ENCODE measurements at regions of chr16 and their contacts with region 1.

Region 1: GRCh38 chr16:68264128-68265077 is at the start of gene SLC7A6:
- DNase-seq: peak; percentile 92
- ATAC-seq: peak; percentile 69
- H3K4me3 Mint-ChIP-seq: peak within 1 kb of the TSS; percentile 91
- H3K27ac Mint-ChIP-seq: peak within 1 kb of the TSS; percentile 97
- H3K4me1 Mint-ChIP-seq: peaks cover 43% of the 10 kb centered on the region
- H3K27me3 Mint-ChIP-seq: no peaks in the 10 kb centered on the region
- total RNA-seq, gene SLC7A6: 55.7 to 58.7 TPM

Region 2: DNA sequence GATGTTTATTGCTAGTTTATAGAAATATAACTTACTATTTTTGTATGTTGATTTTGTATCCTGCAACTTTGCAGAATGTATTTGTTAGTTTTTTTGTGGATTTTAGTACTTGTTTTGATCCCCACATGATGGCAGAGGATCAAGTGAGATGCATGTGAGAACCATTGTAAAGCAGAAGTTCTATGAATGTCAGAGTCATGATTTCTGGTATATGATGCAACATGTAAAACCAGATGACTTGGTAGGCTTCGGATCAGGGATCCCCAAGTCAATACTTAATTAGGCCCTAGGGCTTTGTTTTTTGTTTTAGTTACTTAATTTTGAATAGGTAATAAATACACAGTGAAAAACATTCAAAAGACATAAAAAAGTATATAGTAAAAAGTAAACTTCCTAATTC is 74.3 kb before region 1 on chr16:
- CTCF ChIA-PET with region 1: no interaction called
- POLR2A ChIA-PET with region 1: no interaction called
- intact Hi-C with region 1: no loop called
- DNase-seq: no peak
- ATAC-seq: no peak
- H3K4me3 Mint-ChIP-seq: no peak overlapping the region
- H3K27ac Mint-ChIP-seq: no peak overlapping the region
- H3K4me1 Mint-ChIP-seq: peaks cover 6% of the 10 kb centered on the region
- H3K27me3 Mint-ChIP-seq: no peaks in the 10 kb centered on the region

Region 3: DNA sequence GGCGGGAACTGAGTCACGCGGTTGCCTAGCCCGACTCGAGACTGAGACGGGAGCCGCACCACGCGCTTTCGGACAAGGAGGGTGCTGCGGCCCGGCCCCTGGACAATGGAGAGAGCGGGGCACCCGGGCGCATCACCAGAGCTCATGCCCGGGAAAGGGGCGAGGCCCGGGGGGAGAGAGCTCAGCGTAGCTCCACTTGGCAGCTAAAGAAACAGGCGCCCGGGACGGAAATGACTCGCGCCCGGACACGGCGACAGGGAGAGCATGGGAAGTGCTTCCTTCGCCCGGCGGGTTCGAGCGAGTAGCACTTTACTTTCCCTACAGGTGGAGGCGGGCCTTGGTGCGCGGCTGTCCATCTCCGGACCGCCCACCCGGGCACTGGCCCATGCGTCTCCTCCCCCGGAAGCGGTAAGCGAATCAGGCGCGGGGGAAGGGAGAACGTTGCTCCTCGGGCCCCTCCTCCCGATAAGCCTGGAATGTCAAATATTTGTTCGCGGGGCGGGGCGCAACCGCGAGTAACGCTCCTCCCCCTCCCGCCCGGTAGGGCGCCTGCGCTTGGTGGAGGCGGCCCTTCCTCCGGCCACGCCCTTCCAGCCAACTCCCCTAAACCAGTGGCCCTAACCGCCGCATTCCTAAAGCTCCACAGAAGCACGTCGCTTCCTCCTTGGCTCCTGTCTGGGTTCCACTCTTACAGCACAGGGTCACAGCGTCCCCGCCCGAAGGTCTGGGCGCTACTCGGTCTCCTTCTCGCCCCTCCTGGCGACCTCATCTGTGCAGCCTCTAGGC is 27.0 kb before region 1 on chr16:
- CTCF ChIA-PET with region 1: interaction called, 16 read pairs
- POLR2A ChIA-PET with region 1: interaction called, 3 read pairs
- intact Hi-C with region 1: loop called in 1 of 2 experiments (anchors 1 kb)
- DNase-seq: peak; percentile 96
- ATAC-seq: peak; percentile 79
- H3K4me3 Mint-ChIP-seq: peak overlapping the region; percentile 83
- H3K27ac Mint-ChIP-seq: peak overlapping the region; percentile 86
- H3K4me1 Mint-ChIP-seq: peaks cover 40% of the 10 kb centered on the region
- H3K27me3 Mint-ChIP-seq: no peaks in the 10 kb centered on the region

Region 4: DNA sequence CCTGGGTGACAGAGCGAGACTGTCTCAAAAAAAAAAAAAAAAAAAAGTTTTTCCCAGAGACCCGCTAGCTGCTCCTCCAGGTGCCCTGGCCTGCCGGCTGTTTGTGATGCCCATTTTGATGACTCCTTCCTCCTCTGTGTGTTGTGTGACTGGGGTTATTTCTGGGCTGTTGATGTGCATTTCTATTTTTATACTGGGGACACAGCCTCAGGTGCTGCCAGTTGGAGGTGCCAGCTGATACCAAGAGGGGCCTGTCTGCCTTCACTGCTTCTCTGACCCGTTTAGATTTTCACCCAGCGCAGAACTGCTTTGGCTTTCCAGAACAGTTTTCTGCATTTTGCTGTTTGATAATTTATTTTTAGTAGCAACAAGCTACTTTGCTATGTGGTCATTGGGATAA is 12.6 kb before region 1 on chr16:
- CTCF ChIA-PET with region 1: interaction called, 23 read pairs
- POLR2A ChIA-PET with region 1: interaction called, 3 read pairs
- intact Hi-C with region 1: no loop called
- DNase-seq: no peak
- ATAC-seq: no peak
- H3K4me3 Mint-ChIP-seq: no peak overlapping the region
- H3K27ac Mint-ChIP-seq: no peak overlapping the region
- H3K4me1 Mint-ChIP-seq: peaks cover 2% of the 10 kb centered on the region
- H3K27me3 Mint-ChIP-seq: no peaks in the 10 kb centered on the region

Region 5: GRCh38 chr16:68281368-68282063 is 17.1 kb after region 1 on chr16:
- CTCF ChIA-PET with region 1: interaction called, 67 read pairs
- POLR2A ChIA-PET with region 1: interaction called, 14 read pairs
- intact Hi-C with region 1: loop called (anchors 1 to 2 kb)
- DNase-seq: no peak
- ATAC-seq: peak; percentile 28
- H3K4me3 Mint-ChIP-seq: no peak overlapping the region
- H3K27ac Mint-ChIP-seq: peak overlapping the region; percentile 90
- H3K4me1 Mint-ChIP-seq: peaks cover 77% of the 10 kb centered on the region
- H3K27me3 Mint-ChIP-seq: no peaks in the 10 kb centered on the region

Region 6: GRCh38 chr16:68310761-68311511 is 46.5 kb after region 1 on chr16 and contains the starts of genes PRMT7 and SLC7A6OS:
- CTCF ChIA-PET with region 1: interaction called, 18 read pairs
- POLR2A ChIA-PET with region 1: interaction called, 19 read pairs
- intact Hi-C with region 1: loop called (anchors 1 kb)
- DNase-seq: peak; percentile 97
- ATAC-seq: peak; percentile 99
- H3K4me3 Mint-ChIP-seq: peak within 1 kb of the TSS; percentile 90
- H3K27ac Mint-ChIP-seq: peak within 1 kb of the TSS; percentile 92
- H3K4me1 Mint-ChIP-seq: peaks cover 42% of the 10 kb centered on the region
- H3K27me3 Mint-ChIP-seq: no peaks in the 10 kb centered on the region
- total RNA-seq, gene PRMT7: 62.7 to 70.7 TPM
- total RNA-seq, gene SLC7A6OS: 17.4 to 21.7 TPM

Region 7: DNA sequence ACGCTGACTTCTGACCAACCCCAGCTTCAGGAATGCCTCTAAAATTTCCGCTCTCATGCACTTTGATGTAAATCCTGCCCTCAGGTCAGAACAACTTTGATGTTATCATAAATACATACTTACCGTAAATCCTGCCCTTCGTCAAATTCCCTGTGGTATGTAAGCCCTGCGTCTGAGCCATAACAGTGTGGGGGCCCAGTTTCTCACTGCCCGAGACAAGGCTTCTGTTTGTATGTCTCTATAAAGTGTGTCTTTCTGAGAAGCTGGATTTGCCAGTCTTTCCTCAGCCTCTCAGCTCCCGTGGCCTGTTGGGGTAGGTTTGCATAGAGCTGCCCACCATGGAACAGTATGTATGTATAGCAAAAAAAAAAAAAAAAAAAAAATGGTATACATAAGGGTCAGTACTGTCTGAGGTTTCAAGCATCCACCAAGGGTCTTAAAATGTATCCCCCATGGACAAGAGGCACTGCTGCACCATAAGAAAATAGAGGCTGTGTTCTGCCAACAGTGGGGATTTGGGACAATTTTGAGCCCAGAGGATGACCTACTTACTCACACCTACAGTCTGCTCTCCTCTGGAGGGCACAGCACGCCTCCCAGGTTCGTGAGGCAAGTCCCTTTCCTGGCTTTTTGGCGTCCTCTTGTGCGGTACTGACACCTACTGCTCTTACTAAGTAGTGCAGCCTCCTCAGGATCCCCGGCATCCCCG is 63.9 kb after region 1 on chr16:
- CTCF ChIA-PET with region 1: interaction called, 517 read pairs
- POLR2A ChIA-PET with region 1: interaction called, 3 read pairs
- intact Hi-C with region 1: loop called (anchors 1 kb)
- DNase-seq: peak; percentile 87
- ATAC-seq: peak; percentile 97
- H3K4me3 Mint-ChIP-seq: no peak overlapping the region
- H3K27ac Mint-ChIP-seq: peak overlapping the region; percentile 40
- H3K4me1 Mint-ChIP-seq: peaks cover 26% of the 10 kb centered on the region
- H3K27me3 Mint-ChIP-seq: no peaks in the 10 kb centered on the region

Region 8: DNA sequence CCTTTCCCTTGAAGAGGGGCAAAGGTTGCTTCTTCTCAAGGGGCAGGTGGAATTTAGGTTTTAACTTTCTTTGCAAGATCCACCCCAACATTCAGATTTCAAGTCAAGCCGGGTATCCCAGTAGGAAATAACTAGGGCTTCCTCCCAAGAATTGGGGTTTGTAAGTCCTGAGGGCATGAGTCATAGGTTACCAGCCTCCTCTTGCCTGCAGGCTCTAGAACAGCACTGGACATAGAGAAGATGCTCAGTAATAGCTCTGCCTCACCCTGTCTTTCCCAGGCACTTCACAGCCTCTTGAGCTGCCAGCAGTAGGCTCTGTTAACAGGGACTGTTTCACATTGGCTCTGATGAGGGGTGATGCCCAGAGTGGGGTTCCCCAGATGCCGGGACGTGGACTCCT is 238.9 kb after region 1 on chr16:
- CTCF ChIA-PET with region 1: interaction called, 4 read pairs
- POLR2A ChIA-PET with region 1: no interaction called
- intact Hi-C with region 1: loop called in 1 of 2 experiments (anchors 10 kb)
- DNase-seq: no peak
- ATAC-seq: no peak
- H3K4me3 Mint-ChIP-seq: no peak overlapping the region
- H3K27ac Mint-ChIP-seq: no peak overlapping the region
- H3K4me1 Mint-ChIP-seq: peaks cover 2% of the 10 kb centered on the region
- H3K27me3 Mint-ChIP-seq: no peaks in the 10 kb centered on the region

Measured in activated CD4-positive, alpha-beta T cell treated with anti-CD3 and anti-CD28 coated beads for 36 hours (primary cell).